Gastrocnemius medialis (tissue), 4 donors: ENCODE measurements at regions of chr22 and their contacts with region 1.

Region 1: GRCh38 chr22:39306581-39307361 is 12.7 kb downstream of the RPL3 start:
- DNase-seq: peak in 1 of 2 donors; percentile 39
- ATAC-seq: no peak
- H3K4me3 ChIP-seq: no peak overlapping the region
- H3K27ac ChIP-seq: no peak overlapping the region
- H3K4me1 ChIP-seq: peaks cover 4 to 8% of the 10 kb centered on the region in 2 donors
- H3K27me3 ChIP-seq: no peaks in the 10 kb centered on the region
- CTCF ChIP-seq: peak in 2 of 5 experiments; percentile 17 to 45
- POLR2A ChIP-seq: no peak

Region 2: DNA sequence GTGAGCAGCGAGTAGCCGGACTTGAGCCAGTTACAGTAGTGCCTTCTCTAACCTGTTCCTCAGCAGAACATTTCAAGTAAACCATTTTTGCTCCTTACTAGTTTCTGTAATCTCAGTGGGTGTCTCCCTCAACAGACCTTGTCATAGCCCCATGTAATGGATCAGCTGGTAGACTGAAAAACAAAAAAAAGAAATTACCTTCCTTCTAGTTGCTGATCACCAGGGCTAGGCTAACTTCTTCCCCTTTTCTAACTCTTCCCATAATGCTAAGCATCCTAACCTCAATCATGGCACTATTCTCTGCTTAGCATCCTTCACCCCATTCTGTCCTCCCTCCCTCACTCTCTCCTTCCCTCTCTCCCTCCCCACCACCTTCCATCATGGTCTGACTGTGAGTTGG is 399.0 kb before region 1 on chr22:
- in situ Hi-C with region 1: no loop called
- intact Hi-C with region 1: no loop called
- DNase-seq: no peak
- ATAC-seq: no peak
- H3K4me3 ChIP-seq: no peak overlapping the region
- H3K27ac ChIP-seq: no peak overlapping the region
- H3K4me1 ChIP-seq: no peaks in the 10 kb centered on the region
- H3K27me3 ChIP-seq: peaks cover 0 to 7% (median 4%) of the 10 kb centered on the region in 3 donors
- CTCF ChIP-seq: no peak
- POLR2A ChIP-seq: no peak

Region 3: DNA sequence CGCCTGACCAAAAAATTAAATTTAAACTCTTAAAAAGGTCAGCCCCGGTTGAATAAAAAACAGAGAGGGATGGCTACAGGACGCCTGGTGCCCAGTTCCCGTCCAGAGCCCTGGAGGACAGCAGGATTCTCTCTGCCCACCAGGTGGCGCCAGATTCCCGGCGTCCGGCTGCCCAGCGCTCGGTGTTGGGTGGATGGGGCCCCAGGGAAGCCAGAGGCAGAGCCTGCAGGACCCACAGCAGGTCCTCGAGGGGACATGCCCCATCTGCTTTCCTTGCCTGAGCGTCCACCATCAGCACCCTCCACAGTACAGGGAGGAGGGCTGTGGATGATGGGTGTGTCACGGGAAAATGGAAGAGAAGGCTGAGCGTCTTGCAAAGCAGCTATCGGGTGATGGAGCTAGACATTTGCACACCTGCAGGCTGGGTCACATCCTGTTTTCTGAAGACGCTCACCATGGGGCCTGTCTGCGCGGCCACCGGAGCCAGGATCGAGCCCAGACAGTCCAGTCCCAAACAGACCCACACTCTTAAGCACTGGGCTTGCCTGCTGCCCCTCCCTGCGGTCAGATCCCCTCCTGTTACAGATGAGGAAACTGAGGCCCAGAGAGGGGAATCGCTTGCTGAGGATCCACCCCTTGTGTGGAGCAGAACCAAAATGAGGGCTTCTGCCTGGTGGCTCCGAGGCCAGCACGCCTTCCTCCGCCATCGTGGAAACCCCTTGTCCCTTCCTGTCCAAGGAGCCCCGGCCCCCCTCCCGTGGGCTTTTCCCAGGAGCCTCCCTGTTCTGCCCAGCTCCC is 135.7 kb before region 1 on chr22:
- in situ Hi-C with region 1: loop called (anchors 5 kb)
- intact Hi-C with region 1: loop called (anchors 2 kb)
- DNase-seq: peak; percentile 48 to 72
- ATAC-seq: peak; percentile 81 to 87
- H3K4me3 ChIP-seq: peak overlapping the region in 1 of 4 donors; percentile 21
- H3K27ac ChIP-seq: peak overlapping the region in 3 of 4 donors; percentile 23 to 70 (median 32)
- H3K4me1 ChIP-seq: peaks cover 45 to 53% of the 10 kb centered on the region in 2 donors
- H3K27me3 ChIP-seq: no peaks in the 10 kb centered on the region
- CTCF ChIP-seq: peak; percentile 89 to 99 (median 98)
- POLR2A ChIP-seq: no peak

Region 4: DNA sequence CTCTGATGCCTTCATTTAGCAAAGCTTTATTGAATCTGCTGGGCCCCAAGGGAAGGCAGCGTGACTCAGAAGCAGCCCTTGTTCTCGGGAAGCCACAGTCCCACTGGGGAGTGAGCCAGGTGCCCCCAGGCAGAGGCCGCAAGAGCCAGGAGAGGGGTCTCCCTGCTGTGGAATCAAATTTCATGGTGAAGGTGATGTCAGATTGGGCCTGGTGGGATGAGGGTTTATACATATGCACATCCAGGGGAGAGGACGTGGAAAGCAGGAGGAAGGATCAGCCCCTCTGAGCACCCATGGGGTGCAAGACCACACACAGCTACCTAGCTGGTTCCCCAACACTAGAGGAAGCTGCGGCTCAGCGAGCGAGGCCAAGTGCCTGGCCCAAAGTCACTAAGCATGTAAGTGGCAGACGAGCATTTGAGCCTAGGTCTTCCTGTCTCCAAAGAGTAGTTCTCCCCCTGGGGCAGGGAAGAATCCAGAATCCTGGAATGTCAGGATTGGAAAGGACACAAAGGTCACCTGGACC is 45.0 kb after region 1 on chr22:
- in situ Hi-C with region 1: no loop called
- intact Hi-C with region 1: no loop called
- DNase-seq: no peak
- ATAC-seq: no peak
- H3K4me3 ChIP-seq: no peak overlapping the region
- H3K27ac ChIP-seq: peak overlapping the region in 2 of 4 donors; percentile 80 to 81
- H3K4me1 ChIP-seq: peaks cover 9 to 12% of the 10 kb centered on the region in 2 donors
- H3K27me3 ChIP-seq: no peaks in the 10 kb centered on the region
- CTCF ChIP-seq: no peak
- POLR2A ChIP-seq: no peak

Region 5: GRCh38 chr22:39395936-39396796 is 89.4 kb after region 1 on chr22:
- in situ Hi-C with region 1: no loop called
- intact Hi-C with region 1: no loop called
- DNase-seq: no peak
- ATAC-seq: no peak
- H3K4me3 ChIP-seq: no peak overlapping the region
- H3K27ac ChIP-seq: no peak overlapping the region
- H3K4me1 ChIP-seq: peaks cover 10% of the 10 kb centered on the region in 2 donors
- H3K27me3 ChIP-seq: no peaks in the 10 kb centered on the region
- CTCF ChIP-seq: no peak
- POLR2A ChIP-seq: no peak

Region 6: DNA sequence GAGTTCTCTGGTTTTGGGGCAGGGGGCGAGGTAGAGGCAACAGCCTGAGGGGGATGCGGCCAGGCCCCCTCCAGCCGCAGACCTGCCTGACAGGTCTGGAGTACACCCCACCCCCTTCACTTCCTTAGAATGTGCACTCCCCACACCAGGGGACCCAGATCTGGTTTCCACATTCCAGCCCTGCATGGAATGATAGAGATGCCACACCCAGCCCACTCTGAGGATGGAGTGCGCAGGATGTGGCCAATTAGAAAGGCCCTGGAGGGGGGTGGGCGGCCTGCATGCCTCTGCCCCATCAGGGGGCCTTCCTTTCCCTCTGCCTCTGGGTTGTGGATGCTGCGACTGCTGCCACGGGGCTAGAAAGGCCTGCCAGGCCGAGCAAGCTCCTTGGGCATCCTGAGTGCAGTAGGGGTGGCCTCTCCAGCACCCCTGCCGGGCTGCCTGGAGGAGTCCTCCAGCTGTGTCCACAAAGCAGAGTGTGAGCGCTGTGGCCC is 121.9 kb after region 1 on chr22:
- in situ Hi-C with region 1: no loop called
- intact Hi-C with region 1: no loop called
- DNase-seq: no peak
- ATAC-seq: no peak
- H3K4me3 ChIP-seq: no peak overlapping the region
- H3K27ac ChIP-seq: no peak overlapping the region
- H3K4me1 ChIP-seq: peaks cover 24 to 28% of the 10 kb centered on the region in 2 donors
- H3K27me3 ChIP-seq: no peaks in the 10 kb centered on the region
- CTCF ChIP-seq: no peak
- POLR2A ChIP-seq: no peak